WTC11 (cell line): ENCODE measurements at regions of chr3 and their contacts with region 1.

Region 1: GRCh38 chr3:123449102-123449996 is 459 bp upstream of the ADCY5 start:
- DNase-seq: peak; percentile 50
- ATAC-seq: peak; percentile 33
- H3K4me3 Mint-ChIP-seq: peak overlapping the region; percentile 69
- H3K27ac Mint-ChIP-seq: no peak overlapping the region
- H3K4me1 Mint-ChIP-seq: peaks cover 17% of the 10 kb centered on the region
- H3K27me3 Mint-ChIP-seq: peaks cover 49% of the 10 kb centered on the region
- CTCF ChIP-seq: no peak

Region 2: GRCh38 chr3:123143669-123144411 is 305.5 kb before region 1 on chr3:
- CTCF ChIA-PET with region 1: no interaction called
- POLR2A ChIA-PET with region 1: no interaction called
- DNase-seq: peak; percentile 35
- ATAC-seq: peak; percentile 79
- H3K4me3 Mint-ChIP-seq: no peak overlapping the region
- H3K27ac Mint-ChIP-seq: peak overlapping the region; percentile 74
- H3K4me1 Mint-ChIP-seq: peaks cover 23% of the 10 kb centered on the region
- H3K27me3 Mint-ChIP-seq: no peaks in the 10 kb centered on the region
- CTCF ChIP-seq: no peak

Region 3: GRCh38 chr3:123292321-123293310 is 156.7 kb before region 1 on chr3:
- CTCF ChIA-PET with region 1: no interaction called
- POLR2A ChIA-PET with region 1: no interaction called
- DNase-seq: no peak
- ATAC-seq: 0 out of 2 replicates have a peak, but pooled peaks have one; percentile 23
- H3K4me3 Mint-ChIP-seq: no peak overlapping the region
- H3K27ac Mint-ChIP-seq: no peak overlapping the region
- H3K4me1 Mint-ChIP-seq: no peaks in the 10 kb centered on the region
- H3K27me3 Mint-ChIP-seq: no peaks in the 10 kb centered on the region
- CTCF ChIP-seq: no peak

Region 4: GRCh38 chr3:123314359-123315270 is 134.7 kb before region 1 on chr3:
- CTCF ChIA-PET with region 1: interaction called, 22 read pairs
- POLR2A ChIA-PET with region 1: no interaction called
- DNase-seq: peak; percentile 89
- ATAC-seq: peak; percentile 88
- H3K4me3 Mint-ChIP-seq: peak overlapping the region; percentile 73
- H3K27ac Mint-ChIP-seq: peak overlapping the region; percentile 99
- H3K4me1 Mint-ChIP-seq: peaks cover 93% of the 10 kb centered on the region
- H3K27me3 Mint-ChIP-seq: no peaks in the 10 kb centered on the region
- CTCF ChIP-seq: no peak

Region 5: DNA sequence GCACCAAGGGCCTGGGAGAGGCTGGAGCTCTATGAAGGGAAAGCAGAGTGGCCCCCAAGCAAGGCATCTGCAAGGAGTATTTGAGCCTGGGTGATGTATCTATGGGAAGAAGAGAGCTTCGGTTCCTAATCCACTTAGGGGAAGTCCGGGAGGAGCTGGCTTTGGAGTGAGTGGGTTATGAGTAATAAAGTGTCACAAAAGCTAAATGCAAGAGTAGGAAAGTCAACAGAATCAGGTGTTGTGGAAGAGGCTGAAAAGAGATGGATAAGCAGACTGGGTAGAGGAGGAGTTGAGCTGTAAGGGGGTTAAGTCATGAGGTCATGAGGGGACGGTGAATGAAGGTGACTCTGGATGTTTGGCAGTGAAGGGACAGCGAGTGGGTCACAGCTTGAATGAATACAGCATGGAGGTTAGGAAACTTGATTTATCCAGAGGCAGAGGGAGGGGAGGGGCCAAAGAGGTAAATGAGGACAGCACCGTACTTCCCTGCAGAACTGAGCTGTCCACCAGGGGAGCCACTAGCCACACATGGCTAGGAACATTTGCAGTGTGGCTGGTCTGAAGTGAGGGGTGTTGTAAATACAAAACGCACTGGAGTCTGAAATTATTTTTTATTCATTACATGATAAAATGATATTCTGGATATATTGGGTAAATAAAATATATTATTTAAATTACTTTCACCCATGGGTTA is 83.8 kb before region 1 on chr3:
- CTCF ChIA-PET with region 1: interaction called, 24 read pairs
- POLR2A ChIA-PET with region 1: no interaction called
- DNase-seq: peak; percentile 67
- ATAC-seq: peak; percentile 98
- H3K4me3 Mint-ChIP-seq: no peak overlapping the region
- H3K27ac Mint-ChIP-seq: no peak overlapping the region
- H3K4me1 Mint-ChIP-seq: peaks cover 4% of the 10 kb centered on the region
- H3K27me3 Mint-ChIP-seq: peaks cover 9% of the 10 kb centered on the region
- CTCF ChIP-seq: peak; percentile 39; the same call in 1 of the 2 replicates

Region 6: GRCh38 chr3:123421353-123422174 is 27.8 kb before region 1 on chr3:
- CTCF ChIA-PET with region 1: interaction called, 17 read pairs
- POLR2A ChIA-PET with region 1: no interaction called
- DNase-seq: no peak
- ATAC-seq: no peak
- H3K4me3 Mint-ChIP-seq: no peak overlapping the region
- H3K27ac Mint-ChIP-seq: no peak overlapping the region
- H3K4me1 Mint-ChIP-seq: peaks cover 9% of the 10 kb centered on the region
- H3K27me3 Mint-ChIP-seq: no peaks in the 10 kb centered on the region
- CTCF ChIP-seq: no peak

Region 7: GRCh38 chr3:123476967-123477750 is 27.8 kb after region 1 on chr3:
- CTCF ChIA-PET with region 1: interaction called, 11 read pairs
- POLR2A ChIA-PET with region 1: interaction called, 3 read pairs
- DNase-seq: no peak
- ATAC-seq: no peak
- H3K4me3 Mint-ChIP-seq: no peak overlapping the region
- H3K27ac Mint-ChIP-seq: no peak overlapping the region
- H3K4me1 Mint-ChIP-seq: 0 out of 2 replicates have a peak, but pooled peaks cover 3% of the 10 kb centered on the region
- H3K27me3 Mint-ChIP-seq: no peaks in the 10 kb centered on the region; the same call in 1 of the 2 replicates
- CTCF ChIP-seq: no peak